CD4-positive, alpha-beta memory T cell (primary cell): ENCODE measurements at regions of chr3 and their contacts with region 1.

Region 1: GRCh38 chr3:47791193-47791855 is 9.6 kb upstream of the SMARCC1 start:
- DNase-seq: no peak
- H3K4me3 ChIP-seq: no peak overlapping the region
- H3K4me3 Mint-ChIP-seq: peak overlapping the region in 1 of 8 donors; percentile 46
- H3K27ac ChIP-seq: no peak overlapping the region
- H3K27ac Mint-ChIP-seq: no peak overlapping the region
- H3K4me1 ChIP-seq: no peaks in the 10 kb centered on the region
- H3K4me1 Mint-ChIP-seq: peaks cover 0 to 1% (median 0%) of the 10 kb centered on the region in 4 donors
- H3K27me3 ChIP-seq: no peaks in the 10 kb centered on the region
- H3K27me3 Mint-ChIP-seq: no peaks in the 10 kb centered on the region

Region 2: GRCh38 chr3:47802734-47803477 is 11.6 kb after region 1 on chr3 and contains the start of gene DHX30:
- CTCF ChIA-PET with region 1: interaction called, 7 read pairs
- POLR2A ChIA-PET with region 1: interaction called, 3 read pairs
- intact Hi-C with region 1: loop called (anchors 2 kb)
- DNase-seq: peak; percentile 81 to 90 (median 84)
- H3K4me3 ChIP-seq: peak within 1 kb of the TSS; percentile 95 to 97
- H3K4me3 Mint-ChIP-seq: peak within 1 kb of the TSS; percentile 93 to 97 (median 95)
- H3K27ac ChIP-seq: peak within 1 kb of the TSS; percentile 90
- H3K27ac Mint-ChIP-seq: peak within 1 kb of the TSS; percentile 91 to 98 (median 97)
- H3K4me1 ChIP-seq: peaks cover 27% of the 10 kb centered on the region
- H3K4me1 Mint-ChIP-seq: peaks cover 15 to 27% (median 22%) of the 10 kb centered on the region in 4 donors
- H3K27me3 ChIP-seq: no peaks in the 10 kb centered on the region
- H3K27me3 Mint-ChIP-seq: no peaks in the 10 kb centered on the region
- total RNA-seq, gene DHX30: 86.5 to 93.0 TPM